ENCODE measurements at regions of chr11 and their contacts with region 1.

Region 1: GRCh38 chr11:15650105-15650938 is 535.6 kb downstream of the INSC start:
- DNase-seq: peak; percentile 97

Region 2: DNA sequence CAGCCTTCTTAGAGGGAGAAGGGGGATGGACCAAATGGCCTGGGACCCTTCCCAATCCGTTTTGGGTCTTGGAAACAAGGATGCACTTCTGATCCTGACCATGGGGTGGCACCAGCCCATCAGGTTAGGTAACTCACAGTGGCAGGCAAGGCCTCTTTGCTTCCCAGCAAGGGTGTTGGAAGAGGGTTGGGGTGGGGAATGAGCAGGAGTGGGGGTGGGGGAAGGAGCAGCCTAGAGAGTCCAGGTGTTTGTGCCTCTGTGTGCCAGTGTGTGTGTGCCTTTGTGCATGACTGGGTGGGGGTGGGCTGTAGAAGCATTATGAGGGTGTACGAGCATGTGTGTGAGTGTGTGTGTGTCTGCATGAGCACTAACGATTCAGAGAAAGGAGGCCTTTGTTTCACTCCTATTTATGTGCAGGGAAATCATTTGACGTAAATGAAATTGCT is 322.5 kb before region 1 on chr11:
- intact Hi-C with region 1: loop called (anchors 10 kb)
- DNase-seq: peak; percentile 79

Region 3: DNA sequence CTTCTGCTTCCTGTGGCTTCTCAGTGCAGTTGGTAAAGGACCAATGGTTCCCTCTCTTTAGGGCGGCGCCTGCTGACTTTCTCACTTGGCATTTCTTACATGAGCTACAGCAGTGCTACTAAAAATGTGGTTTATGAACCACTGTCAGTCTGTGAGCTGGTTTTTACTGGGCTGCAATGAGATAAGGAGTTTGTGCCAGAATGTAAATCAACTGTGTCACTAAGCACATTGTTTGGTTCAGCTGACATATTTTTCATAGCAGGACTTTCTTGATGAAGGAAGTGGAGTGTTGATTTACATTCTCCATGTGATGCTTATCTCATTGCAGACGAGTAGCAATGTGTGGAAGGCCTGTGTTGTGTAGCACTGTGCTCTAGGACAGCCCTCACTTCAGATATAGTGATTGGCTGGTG is 242.8 kb after region 1 on chr11:
- intact Hi-C with region 1: loop called (anchors 5 kb)
- DNase-seq: no peak

Region 4: GRCh38 chr11:15955595-15955994 is 305.3 kb after region 1 on chr11:
- intact Hi-C with region 1: loop called (anchors 10 kb)
- DNase-seq: no peak

Measured in cardiac septum (tissue), 1 donor.